Calu3 (cell line): ENCODE measurements at regions of chr2 and their contacts with region 1.

Region 1: GRCh38 chr2:197777823-197778407 is 7.2 kb downstream of the BOLL start:
- DNase-seq: peak; percentile 45
- H3K4me3 Mint-ChIP-seq: no peak overlapping the region
- H3K27ac Mint-ChIP-seq: no peak overlapping the region
- H3K4me1 Mint-ChIP-seq: no peaks in the 10 kb centered on the region
- H3K27me3 Mint-ChIP-seq: no peaks in the 10 kb centered on the region
- CTCF ChIP-seq: peak; percentile 62

Region 2: DNA sequence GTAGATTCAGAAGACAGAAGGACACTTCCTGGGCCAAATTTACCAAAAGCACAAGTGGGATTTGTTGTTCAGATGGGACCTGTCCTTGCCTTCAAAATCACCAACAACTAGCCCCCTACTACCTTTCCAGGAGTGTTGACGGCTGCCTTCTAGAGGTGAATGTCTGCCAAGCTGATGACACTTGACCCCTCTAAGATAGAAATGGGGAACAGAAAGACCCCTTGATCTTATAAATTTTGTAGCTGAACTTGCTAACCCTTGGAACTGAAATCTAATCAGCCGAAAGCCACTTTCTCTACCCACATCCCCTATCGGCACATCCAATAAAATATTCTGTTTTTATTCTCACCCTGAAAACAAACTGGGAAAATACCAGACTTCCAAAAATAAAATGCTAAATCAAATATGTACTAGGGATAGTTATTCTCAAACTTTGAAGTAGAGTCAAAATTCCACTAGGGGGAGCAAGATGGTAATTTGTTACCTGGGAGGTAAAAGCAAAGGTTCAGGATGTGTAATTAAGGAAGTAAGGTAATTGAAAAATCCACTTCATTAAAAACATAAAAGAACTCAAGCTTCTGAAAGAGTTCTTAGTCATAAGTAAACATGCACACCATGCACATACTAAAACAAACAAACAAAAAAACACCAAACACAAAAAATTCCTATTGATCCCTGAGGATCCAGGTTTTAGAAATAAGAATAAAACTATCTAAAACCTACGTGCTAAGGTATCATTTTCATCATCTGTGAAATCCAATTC is 586.6 kb before region 1 on chr2:
- CTCF ChIA-PET with region 1: no interaction called
- intact Hi-C with region 1: loop called (anchors 1 kb)
- DNase-seq: peak; percentile 18
- H3K4me3 Mint-ChIP-seq: no peak overlapping the region
- H3K27ac Mint-ChIP-seq: no peak overlapping the region
- H3K4me1 Mint-ChIP-seq: peaks cover 1% of the 10 kb centered on the region
- H3K27me3 Mint-ChIP-seq: no peaks in the 10 kb centered on the region
- CTCF ChIP-seq: peak; percentile 58

Region 3: DNA sequence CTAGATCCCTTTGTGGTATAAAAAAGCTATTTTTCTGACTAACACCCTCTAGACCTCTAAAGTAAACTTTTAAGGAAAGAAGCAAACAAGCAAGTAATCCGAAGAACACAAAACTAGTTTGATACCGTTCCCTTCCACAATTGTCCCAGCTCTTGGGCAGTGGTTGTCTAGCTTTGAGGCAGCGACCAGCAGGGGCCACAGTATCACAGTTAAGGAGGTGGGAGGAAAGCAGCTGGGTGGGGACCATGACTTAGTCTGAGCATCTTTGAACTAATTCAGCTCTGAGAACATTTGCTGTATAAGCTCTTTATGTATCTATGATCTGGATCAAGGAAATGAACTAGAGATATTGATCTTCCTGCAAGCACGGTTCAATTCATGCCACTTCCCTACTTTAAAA is 394.1 kb before region 1 on chr2:
- CTCF ChIA-PET with region 1: no interaction called
- intact Hi-C with region 1: loop called (anchors 2 kb)
- DNase-seq: no peak
- H3K4me3 Mint-ChIP-seq: no peak overlapping the region
- H3K27ac Mint-ChIP-seq: no peak overlapping the region
- H3K4me1 Mint-ChIP-seq: peaks cover 20% of the 10 kb centered on the region
- H3K27me3 Mint-ChIP-seq: no peaks in the 10 kb centered on the region
- CTCF ChIP-seq: no peak

Region 4: GRCh38 chr2:197499594-197500526 is 278.1 kb before region 1 on chr2 and contains the starts of genes HSPD1 and HSPE1:
- CTCF ChIA-PET with region 1: interaction called, 12 read pairs
- intact Hi-C with region 1: loop called (anchors 1 kb)
- DNase-seq: peak; percentile 98
- H3K4me3 Mint-ChIP-seq: peak within 1 kb of the TSS; percentile 84
- H3K27ac Mint-ChIP-seq: peak within 1 kb of the TSS; percentile 95
- H3K4me1 Mint-ChIP-seq: peaks cover 17% of the 10 kb centered on the region
- H3K27me3 Mint-ChIP-seq: no peaks in the 10 kb centered on the region
- CTCF ChIP-seq: no peak
- total RNA-seq, gene HSPD1: 700 and 757 TPM in 2 replicates
- total RNA-seq, gene HSPE1: 380 and 454 TPM in 2 replicates

Region 5: GRCh38 chr2:197705121-197705911 is 72.6 kb before region 1 on chr2 and contains the start of gene MARS2:
- CTCF ChIA-PET with region 1: no interaction called
- intact Hi-C with region 1: loop called (anchors 1 kb)
- DNase-seq: peak; percentile 92
- H3K4me3 Mint-ChIP-seq: peak within 1 kb of the TSS; percentile 89
- H3K27ac Mint-ChIP-seq: peak within 1 kb of the TSS; percentile 80
- H3K4me1 Mint-ChIP-seq: peaks cover 27% of the 10 kb centered on the region
- H3K27me3 Mint-ChIP-seq: no peaks in the 10 kb centered on the region
- CTCF ChIP-seq: no peak
- total RNA-seq, gene MARS2: 16.9 and 17.7 TPM in 2 replicates

Region 6: DNA sequence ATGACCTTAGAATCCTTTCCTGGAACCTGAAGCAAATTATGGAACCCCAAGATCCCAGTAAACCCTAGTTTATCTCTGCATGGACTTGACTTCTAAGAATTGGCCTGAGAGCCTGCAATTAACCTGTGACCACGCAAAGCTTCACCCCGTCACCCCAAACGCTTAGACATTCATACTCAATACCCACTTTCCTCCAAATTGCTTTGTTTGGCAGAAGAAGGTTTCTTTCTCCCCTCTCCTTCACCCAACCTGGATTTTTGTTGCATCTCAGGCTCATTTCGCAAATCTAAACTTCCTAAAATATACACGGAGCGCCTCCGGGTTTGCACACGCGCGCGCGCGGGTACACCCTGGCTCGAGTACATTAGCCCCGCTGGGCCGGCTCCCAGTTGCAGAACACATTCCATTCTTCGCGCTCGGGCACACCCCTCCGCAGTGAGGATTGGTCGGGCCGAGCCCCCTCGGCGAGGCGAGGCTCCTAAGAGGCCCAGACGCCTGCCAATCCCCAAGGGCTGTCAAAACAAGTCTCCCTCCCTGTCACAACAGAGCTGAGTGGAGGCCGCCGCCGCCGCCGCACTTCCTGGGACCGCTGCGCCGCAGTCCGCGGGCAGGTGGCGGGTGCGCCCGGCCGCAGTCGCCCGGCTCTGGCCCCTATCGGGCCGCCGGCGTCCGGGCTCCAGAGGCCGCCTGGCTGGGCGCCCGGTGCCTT is 26.3 kb after region 1 on chr2 and contains the start of gene PLCL1:
- CTCF ChIA-PET with region 1: no interaction called
- intact Hi-C with region 1: no loop called
- DNase-seq: peak; percentile 91
- H3K4me3 Mint-ChIP-seq: peak within 1 kb of the TSS; percentile 92
- H3K27ac Mint-ChIP-seq: no peak within 1 kb of the TSS
- H3K4me1 Mint-ChIP-seq: peaks cover 17% of the 10 kb centered on the region
- H3K27me3 Mint-ChIP-seq: peaks cover 72% of the 10 kb centered on the region
- CTCF ChIP-seq: no peak
- total RNA-seq, gene PLCL1: 0.07 TPM in 1 of 2 replicates, not detected in the other